ENCODE measurements at regions of chr6 and their contacts with region 1.

Region 1: DNA sequence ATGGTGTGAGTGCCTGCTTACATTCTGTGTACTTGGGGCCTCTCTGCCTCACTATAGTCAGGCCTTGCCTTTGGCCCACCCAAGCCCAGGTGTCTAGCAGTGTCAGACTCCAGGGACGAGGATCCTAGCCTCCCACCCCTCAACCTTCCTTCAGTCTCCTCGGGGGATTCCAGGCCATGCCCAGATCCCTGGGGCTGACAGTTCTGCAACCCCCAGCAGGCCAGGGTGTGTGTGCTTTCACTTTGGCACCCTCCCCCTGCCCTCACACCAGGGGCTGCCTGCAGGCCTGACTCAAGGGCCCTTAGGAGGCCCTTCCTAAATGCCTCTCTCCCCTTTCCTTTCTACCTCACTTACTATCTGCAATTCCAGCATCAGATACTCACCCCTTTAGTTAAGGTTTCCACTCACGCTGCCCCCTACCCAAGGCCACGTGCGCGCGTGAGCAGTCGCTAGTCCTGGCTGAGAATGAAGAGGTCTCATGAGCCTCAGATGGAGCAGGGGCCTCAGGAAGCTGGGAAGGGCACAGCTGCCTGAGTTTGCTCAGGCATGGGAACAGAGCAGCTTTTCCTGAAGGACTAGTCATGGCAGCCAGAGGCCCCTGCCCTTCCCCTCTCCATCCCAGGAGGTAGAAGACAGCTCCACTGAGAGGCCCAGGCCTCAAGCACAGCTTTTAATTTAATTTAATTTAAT is 859 bp upstream of the CLPS start:
- DNase-seq: no peak
- H3K4me3 ChIP-seq: no peak overlapping the region
- H3K27ac ChIP-seq: no peak overlapping the region
- H3K4me1 ChIP-seq: no peaks in the 10 kb centered on the region
- H3K27me3 ChIP-seq: no peaks in the 10 kb centered on the region
- CTCF ChIP-seq: no peak
- POLR2A ChIP-seq: no peak

Region 2: GRCh38 chr6:35786810-35787209 is 11.2 kb before region 1 on chr6:
- intact Hi-C with region 1: loop called (anchors 1 kb)
- DNase-seq: no peak
- H3K4me3 ChIP-seq: peak overlapping the region; percentile 24 to 40
- H3K27ac ChIP-seq: no peak overlapping the region
- H3K4me1 ChIP-seq: no peaks in the 10 kb centered on the region
- H3K27me3 ChIP-seq: no peaks in the 10 kb centered on the region
- CTCF ChIP-seq: no peak
- POLR2A ChIP-seq: no peak

Measured in testis (tissue), 5 donors.